MCF 10A (cell line): ENCODE measurements at regions of chr19 and their contacts with region 1.

Region 1: GRCh38 chr19:27966390-27966816 is 1246.5 kb downstream of the UQCRFS1 start:
- DNase-seq: peak; percentile 3
- H3K4me3 Mint-ChIP-seq: no peak overlapping the region
- H3K27ac Mint-ChIP-seq: no peak overlapping the region
- H3K4me1 Mint-ChIP-seq: no peaks in the 10 kb centered on the region
- H3K27me3 Mint-ChIP-seq: no peaks in the 10 kb centered on the region
- CTCF ChIP-seq: peak; percentile 35

Region 2: GRCh38 chr19:27752530-27753184 is 213.7 kb before region 1 on chr19:
- CTCF ChIA-PET with region 1: no interaction called
- POLR2A ChIA-PET with region 1: no interaction called
- intact Hi-C with region 1: no loop called
- DNase-seq: no peak
- H3K4me3 Mint-ChIP-seq: no peak overlapping the region
- H3K27ac Mint-ChIP-seq: no peak overlapping the region
- H3K4me1 Mint-ChIP-seq: no peaks in the 10 kb centered on the region
- H3K27me3 Mint-ChIP-seq: no peaks in the 10 kb centered on the region
- CTCF ChIP-seq: no peak

Region 3: GRCh38 chr19:28324275-28325060 is 358.1 kb after region 1 on chr19:
- CTCF ChIA-PET with region 1: interaction called, 3 read pairs
- POLR2A ChIA-PET with region 1: no interaction called
- intact Hi-C with region 1: loop called (anchors 2 kb)
- DNase-seq: no peak
- H3K4me3 Mint-ChIP-seq: no peak overlapping the region
- H3K27ac Mint-ChIP-seq: no peak overlapping the region
- H3K4me1 Mint-ChIP-seq: no peaks in the 10 kb centered on the region
- H3K27me3 Mint-ChIP-seq: no peaks in the 10 kb centered on the region
- CTCF ChIP-seq: no peak

Region 4: GRCh38 chr19:28710278-28710677 is 743.9 kb after region 1 on chr19:
- CTCF ChIA-PET with region 1: interaction called, 3 read pairs
- POLR2A ChIA-PET with region 1: no interaction called
- intact Hi-C with region 1: loop called (anchors 10 kb)
- DNase-seq: peak; percentile 48
- H3K4me3 Mint-ChIP-seq: no peak overlapping the region
- H3K27ac Mint-ChIP-seq: no peak overlapping the region
- H3K4me1 Mint-ChIP-seq: no peaks in the 10 kb centered on the region
- H3K27me3 Mint-ChIP-seq: no peaks in the 10 kb centered on the region
- CTCF ChIP-seq: peak; percentile 50